BJ (cell line): ENCODE measurements at regions of chr19 and their contacts with region 1.

Region 1: GRCh38 chr19:1177322-1178114 is 3.5 kb upstream of the SBNO2 start:
- DNase-seq: peak; percentile 86
- H3K4me3 ChIP-seq: no peak overlapping the region
- H3K27me3 ChIP-seq: no peaks in the 10 kb centered on the region
- CTCF ChIP-seq: peak; percentile 35

Region 2: DNA sequence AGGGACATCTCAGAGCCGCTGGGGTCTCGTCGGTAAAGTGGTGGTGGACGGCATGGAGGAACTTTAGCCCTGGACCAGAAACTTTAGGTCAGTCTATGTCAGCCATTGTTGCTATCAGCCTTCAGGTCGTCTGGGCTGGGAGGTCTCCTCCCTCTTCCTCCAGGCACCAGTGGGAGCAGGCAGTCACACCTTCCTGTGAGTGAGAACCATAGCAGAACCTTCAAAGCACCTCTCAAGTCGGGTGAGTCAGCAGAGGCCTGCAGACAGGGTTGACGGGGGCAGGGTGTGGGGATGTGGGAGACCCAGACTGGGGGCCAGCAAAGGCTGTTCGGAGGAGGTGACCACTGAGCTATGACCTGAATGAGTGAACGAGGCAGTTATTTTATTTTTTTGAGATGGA is 11.9 kb after region 1 on chr19:
- CTCF ChIA-PET with region 1: interaction called, 10 read pairs
- POLR2A ChIA-PET with region 1: interaction called, 13 read pairs
- DNase-seq: no peak
- H3K4me3 ChIP-seq: no peak overlapping the region
- H3K27me3 ChIP-seq: no peaks in the 10 kb centered on the region
- CTCF ChIP-seq: no peak

Region 3: DNA sequence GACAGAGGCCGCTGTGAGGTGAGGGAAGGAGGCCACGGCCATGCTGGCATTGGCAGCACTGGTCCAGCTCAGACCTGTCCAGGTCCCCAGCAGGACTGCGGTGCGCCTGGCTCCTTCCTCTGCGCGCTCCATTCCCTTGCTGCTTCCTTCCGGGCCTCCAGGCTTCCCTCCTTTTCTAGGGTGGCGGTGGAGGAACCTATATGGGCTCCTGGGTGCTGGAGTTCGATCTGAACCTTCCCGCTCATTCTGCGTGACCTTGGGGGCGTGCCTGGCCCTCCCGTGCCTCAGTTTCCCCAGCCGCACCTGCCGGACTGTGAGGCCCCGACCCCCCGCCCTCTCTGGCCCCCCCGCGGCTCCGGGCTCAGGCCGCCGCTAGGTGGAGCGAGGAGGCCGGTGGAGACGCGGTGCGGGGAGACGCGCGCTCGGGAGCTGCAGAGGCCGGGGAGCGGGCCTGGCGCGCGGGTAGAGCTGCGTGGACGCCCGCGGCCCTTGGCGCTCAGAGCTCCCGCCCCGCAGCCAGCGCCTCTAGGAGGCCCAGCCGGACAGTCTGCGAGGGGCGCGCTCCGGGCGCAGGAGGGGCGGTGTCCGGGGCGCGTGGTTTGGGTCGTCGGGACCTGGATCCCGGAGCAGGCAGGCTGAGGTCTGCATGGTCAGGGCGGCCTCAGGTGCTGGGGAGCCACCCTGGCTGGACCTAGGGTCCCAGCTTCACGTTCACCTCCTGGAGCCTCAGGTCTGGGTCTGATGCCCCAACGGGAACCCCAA is 138.1 kb after region 1 on chr19:
- CTCF ChIA-PET with region 1: no interaction called
- POLR2A ChIA-PET with region 1: no interaction called
- DNase-seq: no peak
- H3K4me3 ChIP-seq: peak overlapping the region; percentile 14; the same call in 1 of the 2 replicates
- H3K27me3 ChIP-seq: peaks cover 9% of the 10 kb centered on the region
- CTCF ChIP-seq: peak; percentile 61